AG04449 (cell line): ENCODE measurements at regions of chr1 and their contacts with region 1.

Region 1: DNA sequence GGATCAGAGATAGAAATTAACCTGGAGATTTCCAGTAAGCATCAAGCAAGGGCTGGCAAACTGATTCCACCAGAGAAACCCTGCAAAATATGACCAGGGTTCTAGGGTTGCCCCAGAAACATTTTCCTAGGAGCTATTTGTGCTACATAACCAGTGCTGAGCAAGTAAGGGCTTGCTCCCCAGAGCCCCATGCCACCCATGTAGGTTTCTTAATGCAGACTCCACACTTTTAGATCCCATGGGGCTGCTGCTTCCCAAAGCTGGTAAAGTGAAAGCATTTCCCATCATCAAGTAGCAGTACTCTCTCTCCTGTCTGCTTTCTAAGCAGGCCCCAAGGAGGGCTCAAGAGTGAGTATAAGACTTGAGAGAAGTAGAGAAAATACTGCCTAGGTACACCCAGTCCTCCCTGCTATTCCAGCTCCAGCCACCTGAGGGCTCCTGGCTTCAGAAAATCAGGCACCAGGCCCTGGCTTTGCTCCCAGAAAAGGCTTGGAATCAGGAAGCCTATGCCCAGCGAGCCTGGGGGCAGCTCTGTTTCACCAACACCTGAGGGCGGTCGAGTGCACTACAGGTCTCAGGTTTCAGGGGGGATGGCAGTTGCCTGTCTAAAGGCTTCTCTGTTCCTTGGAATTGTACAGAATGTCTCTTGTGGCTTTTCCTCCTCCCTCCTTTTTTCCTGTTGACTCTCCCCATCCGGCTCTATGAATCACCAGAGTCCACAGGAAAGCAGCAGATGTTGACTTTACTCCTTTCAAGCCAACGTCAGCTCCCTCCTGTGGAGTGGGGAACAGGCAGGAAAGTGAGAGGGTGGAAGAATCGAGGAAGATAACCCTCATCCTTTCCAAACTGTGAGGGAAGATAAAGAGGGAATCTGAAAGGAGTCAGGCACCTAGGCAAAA is 6.2 kb upstream of the ANKRD35 start:
- DNase-seq: peak; percentile 95
- H3K4me3 ChIP-seq: no peak overlapping the region; the same call in 1 of the 2 replicates
- CTCF ChIP-seq: peak; percentile 79

Region 2: DNA sequence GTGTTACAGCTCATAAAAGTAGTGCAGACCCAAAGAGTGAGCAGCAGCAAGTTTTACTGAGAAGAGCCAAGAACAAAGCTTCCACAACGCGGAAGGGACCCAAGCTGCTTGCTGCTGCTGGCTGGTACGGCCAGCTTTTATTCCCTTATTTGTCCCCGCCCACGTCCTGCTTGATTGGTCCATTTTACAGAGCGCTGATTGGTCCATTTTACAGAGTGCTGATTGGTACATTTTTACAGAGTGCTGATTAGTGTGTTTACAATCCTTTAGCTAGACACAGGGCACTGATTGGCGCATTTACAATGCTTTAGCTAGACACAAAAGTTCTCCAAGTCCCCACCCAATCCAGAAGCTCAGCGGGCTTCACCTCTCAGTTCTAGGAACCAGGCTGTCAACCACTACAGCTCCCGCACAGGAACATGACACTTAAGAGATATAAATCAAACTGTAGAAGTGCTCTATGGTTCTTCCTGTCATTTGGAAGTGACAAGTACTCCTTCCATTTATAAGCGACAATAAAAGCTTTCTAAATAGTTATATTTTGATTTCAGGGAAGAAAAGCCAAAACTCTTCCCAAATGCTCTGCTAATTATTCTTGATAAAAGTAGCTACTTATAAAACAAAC is 96.5 kb before region 1 on chr1:
- CTCF ChIA-PET with region 1: no interaction called
- POLR2A ChIA-PET with region 1: no interaction called
- DNase-seq: no peak
- H3K4me3 ChIP-seq: no peak overlapping the region
- CTCF ChIP-seq: no peak

Region 3: GRCh38 chr1:145871994-145872924 is 19.6 kb before region 1 on chr1:
- CTCF ChIA-PET with region 1: interaction called, 28 read pairs
- POLR2A ChIA-PET with region 1: interaction called, 4 read pairs
- DNase-seq: no peak
- H3K4me3 ChIP-seq: peak overlapping the region; percentile 29
- CTCF ChIP-seq: no peak

Region 4: GRCh38 chr1:145906954-145907753 is 15.3 kb after region 1 on chr1:
- CTCF ChIA-PET with region 1: interaction called, 469 read pairs
- POLR2A ChIA-PET with region 1: interaction called, 15 read pairs
- DNase-seq: no peak
- H3K4me3 ChIP-seq: no peak overlapping the region
- CTCF ChIP-seq: no peak

Region 5: GRCh38 chr1:145978854-145979759 is 87.3 kb after region 1 on chr1:
- CTCF ChIA-PET with region 1: interaction called, 29 read pairs
- POLR2A ChIA-PET with region 1: interaction called, 3 read pairs
- DNase-seq: peak; percentile 100
- H3K4me3 ChIP-seq: peak overlapping the region; percentile 31
- CTCF ChIP-seq: peak; percentile 42

Region 6: DNA sequence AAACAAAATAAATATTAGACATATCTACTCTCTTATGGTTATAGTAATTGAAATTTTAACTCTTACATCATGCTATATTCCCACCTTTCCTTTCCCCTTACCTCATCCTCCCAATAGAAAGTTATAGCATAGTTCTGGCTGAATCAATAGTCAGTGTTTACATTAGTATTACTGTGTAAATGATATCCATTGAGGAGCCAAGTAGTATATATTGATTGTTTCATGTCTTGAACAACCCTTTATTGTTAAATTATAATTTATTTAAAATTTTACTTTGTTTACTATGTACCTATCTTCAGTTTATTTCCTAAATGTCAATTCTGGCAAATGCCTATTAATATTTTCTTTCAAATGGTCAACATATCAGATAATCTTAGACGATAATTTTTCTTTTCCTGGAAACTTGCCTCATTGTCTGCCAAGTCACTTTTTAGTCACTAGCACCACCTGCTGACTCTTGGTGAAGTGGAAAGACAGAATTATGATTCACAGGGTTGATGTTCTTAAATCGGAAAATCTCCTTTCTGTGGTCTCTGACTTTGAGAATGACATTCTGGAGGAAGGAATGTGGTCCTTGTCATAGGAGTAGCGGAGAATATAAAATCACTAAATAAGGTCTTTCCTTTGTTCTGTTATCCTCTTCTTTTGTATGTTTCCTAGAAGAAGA is 121.0 kb after region 1 on chr1:
- CTCF ChIA-PET with region 1: interaction called, 40 read pairs
- POLR2A ChIA-PET with region 1: no interaction called
- DNase-seq: no peak
- H3K4me3 ChIP-seq: no peak overlapping the region
- CTCF ChIP-seq: peak; percentile 53